CD4-positive, alpha-beta T cell (primary cell): ENCODE measurements at regions of chr2 and their contacts with region 1.

Region 1: DNA sequence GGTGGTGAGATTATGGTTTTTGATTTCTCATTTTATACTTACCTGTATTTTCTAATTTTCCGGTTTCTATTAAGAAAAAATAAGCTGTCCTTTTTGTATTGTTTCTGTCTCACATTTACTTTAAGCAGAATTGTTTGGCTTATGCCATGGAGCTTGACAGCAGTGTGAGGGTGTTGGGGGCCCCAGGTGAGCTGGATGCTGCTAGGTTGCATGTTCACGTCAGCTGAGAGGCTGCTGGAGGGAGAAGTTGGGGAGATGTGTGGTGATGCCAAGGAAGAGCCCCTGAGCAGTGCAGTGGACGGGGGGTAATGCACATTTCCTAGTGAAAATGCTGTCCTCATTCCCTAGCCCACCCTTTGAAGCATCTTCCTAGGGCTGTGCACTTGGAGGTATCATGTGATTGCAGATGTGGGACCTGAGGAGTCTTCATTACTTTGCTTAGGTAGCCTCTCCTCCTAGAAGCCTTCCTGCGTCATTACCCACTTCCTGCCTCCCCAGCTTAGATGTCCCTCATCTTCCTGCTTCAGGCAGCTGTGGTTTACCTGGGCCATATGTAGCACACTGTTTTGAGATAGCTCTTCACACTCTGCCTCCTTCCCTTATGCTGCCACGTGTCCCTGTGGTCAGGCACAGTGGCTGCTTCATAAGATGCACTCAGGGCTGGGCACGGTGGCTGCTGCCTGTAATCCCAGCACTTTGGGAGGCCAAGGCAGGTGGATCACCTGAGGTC is 16.2 kb downstream of the ATG16L1 start:
- DNase-seq: peak; percentile 64 to 96 (median 74)
- ATAC-seq: peak; percentile 88
- H3K4me3 ChIP-seq: peak overlapping the region; percentile 26
- H3K4me3 Mint-ChIP-seq: peak overlapping the region; percentile 62
- H3K27ac ChIP-seq: peak overlapping the region; percentile 86 to 88
- H3K27ac Mint-ChIP-seq: peak overlapping the region; percentile 97
- H3K4me1 ChIP-seq: peaks cover 57% of the 10 kb centered on the region
- H3K4me1 Mint-ChIP-seq: peaks cover 74% of the 10 kb centered on the region
- H3K27me3 ChIP-seq: no peaks in the 10 kb centered on the region
- H3K27me3 Mint-ChIP-seq: no peaks in the 10 kb centered on the region
- CTCF ChIP-seq: no peak

Region 2: DNA sequence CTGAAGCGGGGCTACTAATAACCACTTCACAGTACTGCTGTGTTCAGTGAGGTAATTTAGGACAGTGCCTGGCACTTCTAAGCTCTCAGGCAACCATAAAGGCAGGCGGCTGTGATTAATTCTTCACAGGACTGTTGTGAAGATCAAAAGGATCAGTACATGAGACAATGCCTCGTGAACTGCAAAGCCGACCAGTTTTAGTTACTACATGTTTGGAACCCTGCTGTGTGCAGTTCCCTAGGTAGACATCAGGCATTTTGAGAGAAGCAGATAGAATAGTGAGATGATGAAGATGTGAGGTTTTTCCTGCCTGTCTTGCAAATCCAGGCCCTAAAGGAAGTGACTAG is 615.2 kb before region 1 on chr2:
- CTCF ChIA-PET with region 1: no interaction called
- POLR2A ChIA-PET with region 1: no interaction called
- intact Hi-C with region 1: no loop called
- DNase-seq: no peak
- ATAC-seq: no peak
- H3K4me3 ChIP-seq: no peak overlapping the region
- H3K4me3 Mint-ChIP-seq: no peak overlapping the region
- H3K27ac ChIP-seq: no peak overlapping the region
- H3K27ac Mint-ChIP-seq: no peak overlapping the region
- H3K4me1 ChIP-seq: no peaks in the 10 kb centered on the region
- H3K4me1 Mint-ChIP-seq: no peaks in the 10 kb centered on the region
- H3K27me3 ChIP-seq: no peaks in the 10 kb centered on the region
- H3K27me3 Mint-ChIP-seq: peaks cover 4% of the 10 kb centered on the region
- CTCF ChIP-seq: no peak

Region 3: GRCh38 chr2:233061591-233062450 is 205.9 kb before region 1 on chr2:
- CTCF ChIA-PET with region 1: no interaction called
- POLR2A ChIA-PET with region 1: interaction called, 24 read pairs
- intact Hi-C with region 1: no loop called
- DNase-seq: peak in 4 of 14 experiments; percentile 47 to 64 (median 57)
- ATAC-seq: no peak
- H3K4me3 ChIP-seq: peak overlapping the region; percentile 97
- H3K4me3 Mint-ChIP-seq: peak overlapping the region; percentile 90
- H3K27ac ChIP-seq: peak overlapping the region; percentile 81 to 91
- H3K27ac Mint-ChIP-seq: peak overlapping the region; percentile 95
- H3K4me1 ChIP-seq: peaks cover 69% of the 10 kb centered on the region
- H3K4me1 Mint-ChIP-seq: peaks cover 56% of the 10 kb centered on the region
- H3K27me3 ChIP-seq: no peaks in the 10 kb centered on the region
- H3K27me3 Mint-ChIP-seq: no peaks in the 10 kb centered on the region
- CTCF ChIP-seq: peak; percentile 18

Region 4: GRCh38 chr2:233242231-233242927 is 25.3 kb before region 1 on chr2:
- CTCF ChIA-PET with region 1: interaction called, 3 read pairs
- POLR2A ChIA-PET with region 1: interaction called, 17 read pairs
- intact Hi-C with region 1: no loop called
- DNase-seq: peak in 3 of 14 experiments; percentile 16 to 57 (median 45)
- ATAC-seq: no peak
- H3K4me3 ChIP-seq: no peak overlapping the region
- H3K4me3 Mint-ChIP-seq: no peak overlapping the region
- H3K27ac ChIP-seq: no peak overlapping the region
- H3K27ac Mint-ChIP-seq: peak overlapping the region; percentile 82
- H3K4me1 ChIP-seq: peaks cover 66% of the 10 kb centered on the region
- H3K4me1 Mint-ChIP-seq: peaks cover 69% of the 10 kb centered on the region
- H3K27me3 ChIP-seq: no peaks in the 10 kb centered on the region
- H3K27me3 Mint-ChIP-seq: no peaks in the 10 kb centered on the region
- CTCF ChIP-seq: no peak

Region 5: GRCh38 chr2:233288719-233289118 is 21.0 kb after region 1 on chr2:
- CTCF ChIA-PET with region 1: no interaction called
- POLR2A ChIA-PET with region 1: interaction called, 12 read pairs
- intact Hi-C with region 1: no loop called
- DNase-seq: no peak
- ATAC-seq: no peak
- H3K4me3 ChIP-seq: no peak overlapping the region
- H3K4me3 Mint-ChIP-seq: no peak overlapping the region
- H3K27ac ChIP-seq: no peak overlapping the region
- H3K27ac Mint-ChIP-seq: peak overlapping the region; percentile 42
- H3K4me1 ChIP-seq: no peaks in the 10 kb centered on the region
- H3K4me1 Mint-ChIP-seq: peaks cover 10% of the 10 kb centered on the region
- H3K27me3 ChIP-seq: no peaks in the 10 kb centered on the region
- H3K27me3 Mint-ChIP-seq: no peaks in the 10 kb centered on the region
- CTCF ChIP-seq: no peak

Region 6: GRCh38 chr2:233353769-233354499 is 86.3 kb after region 1 on chr2 and contains the start of gene DGKD:
- CTCF ChIA-PET with region 1: interaction called, 6 read pairs
- POLR2A ChIA-PET with region 1: interaction called, 18 read pairs
- intact Hi-C with region 1: loop called in 1 of 2 experiments (anchors 5 kb)
- DNase-seq: peak; percentile 44 to 91 (median 74)
- ATAC-seq: peak; percentile 88
- H3K4me3 ChIP-seq: peak within 1 kb of the TSS; percentile 88
- H3K4me3 Mint-ChIP-seq: peak within 1 kb of the TSS; percentile 95
- H3K27ac ChIP-seq: peak within 1 kb of the TSS in 1 of 2 donors; percentile 40
- H3K27ac Mint-ChIP-seq: peak within 1 kb of the TSS; percentile 76
- H3K4me1 ChIP-seq: peaks cover 48% of the 10 kb centered on the region
- H3K4me1 Mint-ChIP-seq: peaks cover 74% of the 10 kb centered on the region
- H3K27me3 ChIP-seq: no peaks in the 10 kb centered on the region
- H3K27me3 Mint-ChIP-seq: no peaks in the 10 kb centered on the region
- CTCF ChIP-seq: no peak
- total RNA-seq, gene DGKD: 147 to 156 TPM

Region 7: GRCh38 chr2:233375490-233376314 is 108.0 kb after region 1 on chr2:
- CTCF ChIA-PET with region 1: no interaction called
- POLR2A ChIA-PET with region 1: no interaction called
- intact Hi-C with region 1: no loop called
- DNase-seq: no peak
- ATAC-seq: no peak
- H3K4me3 ChIP-seq: no peak overlapping the region
- H3K4me3 Mint-ChIP-seq: no peak overlapping the region
- H3K27ac ChIP-seq: no peak overlapping the region
- H3K27ac Mint-ChIP-seq: peak overlapping the region; percentile 24
- H3K4me1 ChIP-seq: peaks cover 16% of the 10 kb centered on the region
- H3K4me1 Mint-ChIP-seq: peaks cover 50% of the 10 kb centered on the region
- H3K27me3 ChIP-seq: no peaks in the 10 kb centered on the region
- H3K27me3 Mint-ChIP-seq: no peaks in the 10 kb centered on the region
- CTCF ChIP-seq: no peak

Region 8: DNA sequence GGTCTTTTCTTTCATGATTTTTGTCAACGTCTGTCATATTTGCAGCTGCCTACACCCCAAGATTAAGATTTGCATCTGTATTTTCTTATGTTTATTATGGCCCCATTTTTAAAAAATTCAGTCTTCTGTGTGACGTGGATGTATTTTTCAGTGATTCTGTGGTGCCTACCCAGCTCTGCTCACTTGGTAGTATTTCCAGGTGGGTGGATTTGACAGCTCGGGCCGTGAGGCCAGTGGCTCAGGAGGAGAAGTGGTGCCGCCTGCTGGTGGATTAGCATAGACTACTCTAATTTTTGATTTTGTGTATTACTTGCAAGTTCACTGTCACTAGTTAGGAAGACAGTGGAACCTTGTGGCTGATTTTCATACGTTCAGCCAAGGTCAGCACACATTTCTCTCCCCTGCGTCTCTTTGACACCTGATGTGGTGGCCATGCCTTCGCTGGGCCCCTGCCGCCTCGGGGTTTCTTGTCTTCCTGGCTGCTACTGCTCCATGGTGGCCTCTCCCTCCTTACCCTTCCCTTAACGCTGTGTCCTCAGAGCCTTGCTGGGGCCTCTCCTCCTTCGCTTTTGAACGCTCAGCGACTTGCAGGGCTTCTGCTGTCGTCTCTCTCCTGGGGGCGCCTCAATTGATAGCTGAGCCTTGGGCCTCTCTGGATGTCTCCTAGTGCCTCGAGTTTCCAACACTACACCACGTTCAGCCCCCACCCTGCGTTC is 175.9 kb after region 1 on chr2:
- CTCF ChIA-PET with region 1: interaction called, 4 read pairs
- POLR2A ChIA-PET with region 1: no interaction called
- intact Hi-C with region 1: loop called in 1 of 2 experiments (anchors 5 kb)
- DNase-seq: peak; percentile 74 to 92 (median 82)
- ATAC-seq: peak; percentile 99
- H3K4me3 ChIP-seq: no peak overlapping the region
- H3K4me3 Mint-ChIP-seq: no peak overlapping the region
- H3K27ac ChIP-seq: no peak overlapping the region
- H3K27ac Mint-ChIP-seq: peak overlapping the region; percentile 55
- H3K4me1 ChIP-seq: peaks cover 12% of the 10 kb centered on the region
- H3K4me1 Mint-ChIP-seq: peaks cover 32% of the 10 kb centered on the region
- H3K27me3 ChIP-seq: no peaks in the 10 kb centered on the region
- H3K27me3 Mint-ChIP-seq: no peaks in the 10 kb centered on the region
- CTCF ChIP-seq: peak; percentile 95